Transverse colon (tissue), 4 donors: ENCODE measurements at regions of chr6 and their contacts with region 1.

Region 1: DNA sequence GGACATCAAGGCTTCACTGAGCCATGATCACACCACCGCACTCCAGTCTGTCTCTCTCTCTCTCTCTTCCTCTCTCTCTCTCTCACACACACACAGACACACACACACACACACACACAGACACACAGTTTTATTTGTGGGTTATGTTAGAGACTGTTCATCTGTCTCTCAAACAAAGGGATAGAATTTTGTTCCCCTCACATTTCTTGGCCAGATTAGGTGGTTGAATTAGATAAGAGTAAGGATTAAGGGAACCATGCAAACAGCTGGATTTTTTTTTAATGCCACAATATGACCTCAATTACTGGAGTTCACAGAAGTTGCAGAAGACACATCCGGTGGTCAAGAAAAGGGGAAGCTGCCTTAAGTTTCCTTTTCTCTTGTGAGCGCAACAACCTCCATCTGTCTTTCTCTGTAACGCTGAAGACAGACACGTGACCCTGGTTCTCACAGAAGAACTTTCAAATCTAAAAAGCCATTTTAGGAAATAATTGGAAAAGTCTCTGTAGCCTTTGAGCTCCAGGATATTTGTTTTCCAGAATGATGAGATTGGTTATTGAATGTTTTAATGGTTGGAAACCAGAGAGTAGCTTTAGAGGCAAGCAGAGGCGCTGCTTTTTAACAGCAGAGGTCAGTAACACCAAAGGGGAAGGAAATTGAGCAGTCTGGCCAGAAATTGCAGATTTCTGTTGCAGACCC is 33.0 kb upstream of the LGSN start:
- DNase-seq: peak; percentile 37
- H3K4me3 ChIP-seq: no peak overlapping the region
- H3K27ac ChIP-seq: peak overlapping the region; percentile 7 to 35 (median 26)
- H3K4me1 ChIP-seq: peaks cover 3 to 20% (median 5%) of the 10 kb centered on the region in 4 donors
- H3K27me3 ChIP-seq: no peaks in the 10 kb centered on the region
- CTCF ChIP-seq: peak; percentile 54 to 61 (median 59)
- EP300 ChIP-seq: no peak
- POLR2A ChIP-seq: no peak

Region 2: GRCh38 chr6:63372951-63373533 is 20.3 kb after region 1 on chr6:
- in situ Hi-C with region 1: no loop called
- intact Hi-C with region 1: no loop called
- DNase-seq: no peak
- H3K4me3 ChIP-seq: no peak overlapping the region
- H3K27ac ChIP-seq: no peak overlapping the region
- H3K4me1 ChIP-seq: no peaks in the 10 kb centered on the region
- H3K27me3 ChIP-seq: no peaks in the 10 kb centered on the region
- CTCF ChIP-seq: no peak
- EP300 ChIP-seq: no peak
- POLR2A ChIP-seq: no peak

Region 3: DNA sequence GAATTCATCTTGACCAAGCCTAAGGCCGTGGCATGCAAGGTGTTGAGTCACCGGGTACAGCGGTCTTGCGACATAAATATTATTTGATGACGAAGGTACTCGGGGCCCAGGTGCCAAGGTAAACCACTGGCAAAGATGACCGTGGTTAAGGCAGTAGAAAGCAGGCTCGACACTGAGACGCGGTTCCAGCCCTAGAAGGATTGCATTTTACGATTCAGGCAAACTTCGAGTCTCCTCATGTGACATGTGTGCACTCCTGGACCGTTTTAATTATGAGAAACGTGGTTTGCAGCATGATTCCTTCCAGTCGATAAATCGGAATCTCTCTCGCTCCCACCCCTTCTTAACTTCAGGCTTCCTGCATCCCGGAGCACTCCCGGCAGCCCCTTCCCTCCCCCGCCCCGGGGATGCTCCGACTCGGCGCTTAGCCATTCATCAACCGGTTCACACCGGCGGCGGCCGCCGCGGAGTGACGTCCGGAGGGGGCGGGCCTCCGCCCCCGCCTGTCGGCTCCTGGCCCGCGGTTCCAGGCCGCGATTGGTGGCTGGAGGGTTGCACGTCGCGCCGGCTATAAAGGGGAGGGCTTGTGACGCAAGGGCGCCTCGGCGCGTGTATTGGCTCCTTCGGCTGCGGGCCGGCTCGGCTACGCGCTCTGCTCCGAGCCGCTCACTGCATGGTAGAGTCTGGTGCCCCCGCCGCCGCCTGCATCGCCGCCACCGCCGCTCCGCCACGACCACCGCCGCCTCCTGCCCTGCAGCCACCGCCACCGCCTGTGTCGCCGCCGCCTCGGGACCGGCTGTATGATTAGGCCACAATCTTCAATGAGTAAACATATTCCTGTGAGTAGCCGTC is 219.4 kb after region 1 on chr6 and contains the starts of genes LOC128125822 and PTP4A1:
- in situ Hi-C with region 1: loop called in 2 of 4 experiments (anchors 25 kb)
- intact Hi-C with region 1: loop called (anchors 5 kb)
- DNase-seq: peak; percentile 98
- H3K4me3 ChIP-seq: peak within 1 kb of the TSS; percentile 86 to 98 (median 90)
- H3K27ac ChIP-seq: peak within 1 kb of the TSS; percentile 99 to 100 (median 100)
- H3K4me1 ChIP-seq: peaks cover 12 to 51% (median 24%) of the 10 kb centered on the region in 4 donors
- H3K27me3 ChIP-seq: no peaks in the 10 kb centered on the region
- CTCF ChIP-seq: no peak
- EP300 ChIP-seq: peak; percentile 89
- POLR2A ChIP-seq: peak; percentile 99
- total RNA-seq, gene PTP4A1: 31.4 to 100 (median 67.9) TPM

Region 4: DNA sequence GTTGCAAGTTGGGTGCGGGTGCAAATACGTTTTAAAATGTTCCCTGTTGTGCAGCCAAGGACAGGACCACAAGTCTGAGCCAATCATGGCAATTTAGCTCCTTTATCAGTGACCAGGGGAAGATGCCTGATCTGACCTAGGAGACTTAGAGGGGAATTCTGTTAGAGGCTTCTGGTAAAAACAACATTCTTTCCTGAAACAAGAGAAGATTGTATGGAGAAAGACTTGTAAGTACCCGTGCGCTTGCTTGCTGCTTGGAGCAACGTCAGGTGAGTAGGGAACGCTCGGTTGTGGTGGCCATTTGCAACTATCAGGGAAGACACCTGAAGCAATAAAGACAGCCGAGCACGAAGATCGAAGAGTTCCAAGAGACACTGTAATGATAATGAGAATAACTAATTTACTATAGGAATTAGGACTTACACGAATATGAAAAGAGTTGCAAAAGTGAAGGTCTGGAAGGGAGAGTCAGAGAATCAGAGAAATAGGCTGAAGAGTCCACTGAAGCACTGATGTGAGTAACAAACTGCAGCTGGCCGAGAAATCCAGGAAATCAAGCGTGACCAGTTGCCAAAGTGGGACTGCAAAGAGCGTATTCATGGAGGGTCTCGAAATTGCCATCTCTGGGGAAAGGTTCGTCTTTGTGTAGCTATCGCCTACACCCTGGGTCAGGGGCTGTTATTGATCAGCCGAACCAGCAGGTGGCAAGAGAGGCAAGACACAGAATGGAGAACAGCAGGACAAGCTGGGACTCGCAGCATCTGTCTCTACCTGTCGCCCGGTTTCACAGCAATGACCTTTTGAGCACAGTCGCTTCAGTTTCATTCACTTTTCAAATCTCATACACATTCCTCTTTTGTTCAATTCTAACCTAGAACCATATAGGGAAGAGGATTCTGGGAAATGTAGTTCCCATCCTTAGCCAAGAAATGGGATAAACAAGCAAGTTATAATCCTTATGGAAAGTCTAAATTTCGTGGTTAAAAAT is 245.6 kb after region 1 on chr6:
- in situ Hi-C with region 1: loop called in 3 of 4 experiments (anchors 10 to 25 kb)
- intact Hi-C with region 1: no loop called
- DNase-seq: peak; percentile 81
- H3K4me3 ChIP-seq: peak overlapping the region; percentile 29 to 62 (median 41)
- H3K27ac ChIP-seq: peak overlapping the region; percentile 24 to 73 (median 71)
- H3K4me1 ChIP-seq: peaks cover 0 to 10% (median 4%) of the 10 kb centered on the region in 4 donors
- H3K27me3 ChIP-seq: no peaks in the 10 kb centered on the region
- CTCF ChIP-seq: peak; percentile 82 to 93 (median 87)
- EP300 ChIP-seq: no peak
- POLR2A ChIP-seq: no peak

Region 5: DNA sequence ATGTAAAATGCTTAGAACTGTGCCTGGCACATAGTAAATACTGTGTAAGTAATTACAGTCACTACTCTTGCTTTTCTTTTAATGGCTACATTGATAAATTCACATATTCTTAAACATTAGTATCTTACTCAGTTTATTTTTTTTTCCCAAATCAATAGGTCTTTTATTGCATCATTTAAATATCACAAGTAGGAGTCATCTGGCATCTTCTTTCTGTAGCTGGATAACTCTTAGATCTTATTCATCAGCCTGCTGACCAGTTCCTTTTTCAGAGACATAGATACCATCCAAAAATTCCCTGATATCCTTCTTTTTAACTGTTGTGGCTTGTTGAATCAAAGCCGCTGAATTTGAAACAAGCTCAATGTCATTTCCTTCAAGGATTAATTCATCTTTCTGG is 262.9 kb after region 1 on chr6:
- in situ Hi-C with region 1: no loop called
- intact Hi-C with region 1: no loop called
- DNase-seq: no peak
- H3K4me3 ChIP-seq: no peak overlapping the region
- H3K27ac ChIP-seq: no peak overlapping the region
- H3K4me1 ChIP-seq: no peaks in the 10 kb centered on the region
- H3K27me3 ChIP-seq: no peaks in the 10 kb centered on the region
- CTCF ChIP-seq: no peak
- EP300 ChIP-seq: no peak
- POLR2A ChIP-seq: no peak

Region 6: DNA sequence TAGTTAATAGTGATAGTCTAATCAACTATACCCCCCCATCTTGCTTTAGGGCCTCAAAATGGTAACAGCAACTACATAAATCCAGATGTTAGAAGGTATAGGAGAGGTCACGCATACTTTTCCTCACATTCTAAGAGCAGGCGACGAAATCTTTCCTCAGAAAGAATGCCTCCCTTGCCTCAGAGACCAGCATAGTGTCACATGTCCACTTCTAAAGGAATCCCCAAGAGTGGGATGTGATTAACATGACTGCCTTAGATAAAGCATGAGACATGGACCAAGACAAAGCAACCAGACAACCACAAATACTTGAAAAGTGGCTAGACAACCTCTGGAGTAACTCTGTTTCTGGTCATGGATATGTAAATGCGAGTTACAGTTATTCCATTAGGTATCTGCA is 1643.6 kb after region 1 on chr6:
- in situ Hi-C with region 1: no loop called
- intact Hi-C with region 1: no loop called
- DNase-seq: no peak
- H3K4me3 ChIP-seq: no peak overlapping the region
- H3K27ac ChIP-seq: no peak overlapping the region
- H3K4me1 ChIP-seq: no peaks in the 10 kb centered on the region
- H3K27me3 ChIP-seq: no peaks in the 10 kb centered on the region
- CTCF ChIP-seq: no peak
- EP300 ChIP-seq: no peak
- POLR2A ChIP-seq: no peak